Calu3 (cell line): ENCODE measurements at regions of chr17 and their contacts with region 1.

Region 1: DNA sequence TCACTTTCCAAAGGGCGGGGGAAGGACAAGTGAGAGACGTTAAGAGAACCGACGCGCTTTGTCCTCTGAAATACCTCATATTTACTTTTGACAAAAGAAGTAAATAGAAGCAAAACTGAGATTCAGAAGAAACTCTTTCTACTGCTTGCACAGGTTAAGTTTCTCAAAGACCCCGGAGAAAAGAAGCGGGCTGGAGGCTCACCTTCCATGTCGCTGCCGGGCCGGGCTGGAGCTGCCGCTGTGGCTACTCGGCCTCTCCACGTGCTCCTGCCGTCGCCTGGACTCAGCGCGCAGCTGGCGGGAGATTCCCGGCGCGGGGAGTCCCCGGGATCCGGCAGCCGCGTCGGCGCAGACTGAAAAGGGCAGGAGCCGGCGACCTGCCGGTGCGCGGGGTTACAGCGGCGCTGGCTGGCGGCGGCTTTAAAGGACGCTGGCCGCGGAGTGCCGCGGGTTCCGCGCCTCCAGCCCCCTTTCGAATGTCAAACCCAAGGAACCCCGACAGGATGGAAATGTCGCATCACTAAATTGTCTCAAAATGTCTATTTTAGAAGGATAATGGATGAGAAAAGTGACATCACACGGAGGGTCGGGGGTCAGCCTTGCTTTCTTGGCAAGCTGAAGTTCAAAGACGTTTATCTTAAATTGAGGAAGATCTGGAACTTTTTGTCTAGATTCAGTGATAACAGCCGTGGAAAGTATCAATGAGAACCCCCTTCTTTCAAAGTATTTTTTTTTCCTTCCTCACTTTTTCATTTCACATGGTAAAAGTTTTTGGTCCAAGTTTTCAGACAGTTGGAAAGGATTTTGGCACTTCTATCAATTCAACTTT is at the start of gene IKZF3:
- DNase-seq: peak; percentile 100
- H3K4me3 Mint-ChIP-seq: peak within 1 kb of the TSS; percentile 67
- H3K27ac Mint-ChIP-seq: peak within 1 kb of the TSS; percentile 31
- H3K4me1 Mint-ChIP-seq: peaks cover 38% of the 10 kb centered on the region
- H3K27me3 Mint-ChIP-seq: peaks cover 53% of the 10 kb centered on the region
- CTCF ChIP-seq: no peak
- total RNA-seq, gene IKZF3: 30.9 and 41.0 TPM in 2 replicates

Region 2: GRCh38 chr17:39547713-39548478 is 316.2 kb before region 1 on chr17:
- CTCF ChIA-PET with region 1: no interaction called
- intact Hi-C with region 1: no loop called
- DNase-seq: peak; percentile 96
- H3K4me3 Mint-ChIP-seq: no peak overlapping the region
- H3K27ac Mint-ChIP-seq: no peak overlapping the region
- H3K4me1 Mint-ChIP-seq: peaks cover 12% of the 10 kb centered on the region
- H3K27me3 Mint-ChIP-seq: no peaks in the 10 kb centered on the region
- CTCF ChIP-seq: peak; percentile 100

Region 3: DNA sequence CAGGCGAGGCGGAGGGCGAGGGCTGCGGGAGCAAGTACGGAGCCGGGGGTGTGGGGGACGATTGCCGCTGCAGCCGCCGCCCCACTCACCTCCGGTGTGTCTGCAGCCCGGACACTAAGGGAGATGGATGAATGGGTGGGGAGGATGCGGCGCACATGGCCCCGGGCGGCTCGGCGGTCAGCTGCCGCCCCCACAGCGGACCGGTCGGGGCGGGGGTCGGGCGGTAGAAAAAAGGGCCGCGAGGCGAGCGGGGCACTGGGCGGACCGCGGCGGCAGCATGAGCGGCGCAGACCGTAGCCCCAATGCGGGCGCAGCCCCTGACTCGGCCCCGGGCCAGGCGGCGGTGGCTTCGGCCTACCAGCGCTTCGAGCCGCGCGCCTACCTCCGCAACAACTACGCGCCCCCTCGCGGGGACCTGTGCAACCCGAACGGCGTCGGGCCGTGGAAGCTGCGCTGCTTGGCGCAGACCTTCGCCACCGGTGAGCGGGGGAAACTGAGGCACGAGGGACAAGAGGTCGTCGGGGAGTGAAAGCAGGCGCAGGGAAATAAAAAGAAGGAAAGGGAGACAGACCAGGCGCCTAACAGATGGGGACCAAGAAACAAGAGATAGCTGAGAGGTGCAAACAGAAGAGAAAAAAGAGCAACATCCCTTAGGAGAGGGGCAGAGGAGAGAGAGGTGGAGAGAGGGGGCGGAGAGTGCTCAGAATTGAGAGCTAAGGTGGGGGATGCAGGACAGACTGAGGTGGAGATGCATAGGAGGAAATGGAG is 195.7 kb before region 1 on chr17 and contains the start of gene PNMT:
- CTCF ChIA-PET with region 1: interaction called, 119 read pairs
- intact Hi-C with region 1: no loop called
- DNase-seq: peak; percentile 100
- H3K4me3 Mint-ChIP-seq: peak within 1 kb of the TSS; percentile 24
- H3K27ac Mint-ChIP-seq: peak within 1 kb of the TSS; percentile 0
- H3K4me1 Mint-ChIP-seq: peaks cover 65% of the 10 kb centered on the region
- H3K27me3 Mint-ChIP-seq: peaks cover 69% of the 10 kb centered on the region
- CTCF ChIP-seq: no peak
- total RNA-seq, gene PNMT: 1.3 and 3.2 TPM in 2 replicates

Region 4: DNA sequence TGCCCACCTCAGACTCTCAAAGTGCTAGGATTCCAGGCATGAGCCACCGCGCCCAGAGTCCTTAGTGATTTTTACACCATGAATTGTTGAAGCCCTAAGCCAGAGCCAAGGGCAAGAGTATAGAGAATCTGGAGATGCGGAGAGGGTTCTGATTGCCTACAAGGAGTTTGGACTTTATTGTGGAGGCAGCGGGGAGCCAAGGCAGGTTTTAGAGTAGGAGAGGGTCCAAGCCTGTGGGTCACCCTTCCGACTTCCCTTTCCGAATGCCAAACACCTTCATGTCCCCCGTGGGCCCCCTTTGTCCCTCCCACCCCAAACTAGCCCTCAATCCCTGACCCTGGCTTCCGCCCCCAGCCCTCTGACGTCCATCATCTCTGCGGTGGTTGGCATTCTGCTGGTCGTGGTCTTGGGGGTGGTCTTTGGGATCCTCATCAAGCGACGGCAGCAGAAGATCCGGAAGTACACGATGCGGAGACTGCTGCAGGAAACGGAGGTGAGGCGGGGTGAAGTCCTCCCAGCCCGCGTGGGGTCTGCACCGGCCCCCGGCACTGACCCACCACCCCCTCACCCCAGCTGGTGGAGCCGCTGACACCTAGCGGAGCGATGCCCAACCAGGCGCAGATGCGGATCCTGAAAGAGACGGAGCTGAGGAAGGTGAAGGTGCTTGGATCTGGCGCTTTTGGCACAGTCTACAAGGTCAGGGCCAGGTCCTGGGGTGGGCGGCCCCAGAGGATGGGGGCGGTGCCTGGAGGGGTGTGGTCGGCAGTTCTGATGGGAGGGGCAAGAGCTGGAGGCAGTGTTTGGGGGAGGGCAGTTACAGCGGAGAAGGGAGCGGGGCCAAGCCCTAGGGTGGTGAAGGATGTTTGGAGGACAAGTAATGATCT is 140.9 kb before region 1 on chr17:
- CTCF ChIA-PET with region 1: interaction called, 217 read pairs
- intact Hi-C with region 1: no loop called
- DNase-seq: peak; percentile 75
- H3K4me3 Mint-ChIP-seq: peak overlapping the region; percentile 0
- H3K27ac Mint-ChIP-seq: peak overlapping the region; percentile 28
- H3K4me1 Mint-ChIP-seq: peaks cover 38% of the 10 kb centered on the region
- H3K27me3 Mint-ChIP-seq: no peaks in the 10 kb centered on the region
- CTCF ChIP-seq: no peak

Region 5: DNA sequence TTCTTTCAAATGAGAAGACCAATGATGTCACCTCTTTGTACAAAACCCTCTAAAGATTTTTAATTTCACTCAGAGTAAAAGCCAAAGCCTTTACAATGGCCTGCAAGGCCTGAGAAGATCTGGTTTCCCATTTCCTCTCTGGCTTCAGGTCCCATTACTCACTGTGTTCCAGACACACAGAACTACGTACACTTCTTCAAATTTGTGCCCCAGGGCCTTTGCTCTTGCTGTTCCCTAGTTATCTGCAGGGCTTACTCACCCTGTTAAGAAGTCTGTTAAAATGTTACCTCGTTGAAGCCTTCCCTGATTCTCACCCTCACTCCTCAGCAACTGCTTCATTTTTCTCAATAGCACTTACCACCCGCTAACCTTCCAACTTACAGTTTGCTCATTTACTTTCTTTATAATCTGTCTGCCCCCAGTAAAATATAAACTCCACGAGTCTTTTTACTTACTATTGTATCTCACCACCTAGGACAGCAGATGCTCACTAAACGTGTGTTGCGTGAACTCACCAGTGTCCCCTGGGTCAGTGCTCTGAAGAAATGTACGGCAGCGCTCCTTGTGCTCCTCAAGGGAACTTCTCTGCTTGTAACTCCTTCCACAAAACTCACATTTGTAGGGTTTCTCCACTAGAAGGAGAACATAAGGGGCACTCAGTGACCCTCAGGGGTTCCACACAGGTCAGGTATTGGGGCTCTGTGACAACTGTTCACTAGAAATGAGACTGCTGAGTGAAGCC is 76.2 kb before region 1 on chr17:
- CTCF ChIA-PET with region 1: interaction called, 375 read pairs
- intact Hi-C with region 1: no loop called
- DNase-seq: peak; percentile 80
- H3K4me3 Mint-ChIP-seq: no peak overlapping the region
- H3K27ac Mint-ChIP-seq: no peak overlapping the region
- H3K4me1 Mint-ChIP-seq: peaks cover 29% of the 10 kb centered on the region
- H3K27me3 Mint-ChIP-seq: no peaks in the 10 kb centered on the region
- CTCF ChIP-seq: no peak

Region 6: DNA sequence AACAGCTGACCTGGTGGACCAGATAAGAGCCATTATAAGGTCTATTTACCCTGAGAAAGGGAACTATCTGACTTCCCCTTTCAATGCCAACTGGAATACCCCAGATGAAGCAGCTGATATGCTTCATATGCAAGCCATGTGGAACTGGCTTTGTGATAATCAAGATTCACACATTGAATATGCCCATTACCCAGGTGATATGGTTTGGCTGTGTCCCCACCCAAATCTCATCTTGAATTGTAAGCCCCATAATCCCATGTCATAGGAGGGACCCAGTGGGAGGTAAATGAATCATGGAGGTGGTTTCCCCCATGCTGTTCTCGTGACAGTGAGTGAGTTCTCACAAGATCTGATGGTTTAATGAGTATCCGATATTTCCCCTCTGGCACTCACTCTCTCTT is 42.1 kb before region 1 on chr17:
- CTCF ChIA-PET with region 1: interaction called, 258 read pairs
- intact Hi-C with region 1: no loop called
- DNase-seq: peak; percentile 59
- H3K4me3 Mint-ChIP-seq: no peak overlapping the region
- H3K27ac Mint-ChIP-seq: no peak overlapping the region
- H3K4me1 Mint-ChIP-seq: peaks cover 9% of the 10 kb centered on the region
- H3K27me3 Mint-ChIP-seq: no peaks in the 10 kb centered on the region
- CTCF ChIP-seq: no peak

Region 7: DNA sequence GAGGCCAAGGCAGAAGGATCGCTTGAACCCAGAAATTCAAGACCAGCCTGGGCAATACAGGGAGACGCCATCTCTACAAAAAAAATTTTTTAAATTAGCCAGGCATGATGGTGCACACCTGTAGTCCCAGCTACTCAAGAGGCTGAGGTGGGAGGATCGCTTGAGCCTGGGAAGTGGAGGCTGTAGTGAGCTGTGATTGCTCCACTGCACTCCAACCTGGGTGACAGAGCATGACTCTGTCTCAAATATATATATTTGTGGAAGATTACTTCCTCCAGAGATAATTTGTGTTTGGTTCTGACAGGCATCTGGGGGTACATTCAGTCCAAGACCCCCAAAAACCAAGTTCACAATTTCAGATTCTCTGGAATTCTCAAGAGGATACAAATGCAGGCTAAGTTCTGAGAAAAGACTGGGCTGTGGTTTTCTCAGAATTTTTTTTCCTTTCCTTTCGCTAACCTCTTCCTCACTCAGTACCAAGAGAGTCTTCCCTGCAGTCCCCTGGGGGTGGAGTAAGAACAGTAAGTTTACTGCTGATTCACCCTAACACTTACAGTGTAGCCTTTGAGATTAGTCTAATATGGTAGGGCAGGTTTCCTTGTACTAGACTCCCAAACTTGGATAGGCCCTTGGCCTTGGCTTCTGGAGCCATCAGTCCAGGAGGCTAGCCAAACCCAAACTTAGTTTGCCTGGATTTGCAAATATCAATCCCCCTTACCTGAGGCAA is 39.2 kb after region 1 on chr17:
- CTCF ChIA-PET with region 1: interaction called, 1,000 read pairs
- intact Hi-C with region 1: no loop called
- DNase-seq: peak; percentile 66
- H3K4me3 Mint-ChIP-seq: no peak overlapping the region
- H3K27ac Mint-ChIP-seq: no peak overlapping the region
- H3K4me1 Mint-ChIP-seq: peaks cover 12% of the 10 kb centered on the region
- H3K27me3 Mint-ChIP-seq: no peaks in the 10 kb centered on the region
- CTCF ChIP-seq: no peak

Region 8: GRCh38 chr17:39963829-39964228 is 99.7 kb after region 1 on chr17:
- CTCF ChIA-PET with region 1: interaction called, 184 read pairs
- intact Hi-C with region 1: loop called (anchors 1 kb)
- DNase-seq: peak; percentile 94
- H3K4me3 Mint-ChIP-seq: no peak overlapping the region
- H3K27ac Mint-ChIP-seq: peak overlapping the region; percentile 0
- H3K4me1 Mint-ChIP-seq: peaks cover 45% of the 10 kb centered on the region
- H3K27me3 Mint-ChIP-seq: peaks cover 32% of the 10 kb centered on the region
- CTCF ChIP-seq: no peak